ENCODE measurements at regions of chr3 and their contacts with region 1.

Region 1: GRCh38 chr3:63961891-63962290 is 49.7 kb upstream of the SCAANT1 start:
- DNase-seq: peak; percentile 65
- H3K4me3 ChIP-seq: no peak overlapping the region
- H3K27ac ChIP-seq: no peak overlapping the region
- H3K4me1 ChIP-seq: peaks cover 22% of the 10 kb centered on the region
- H3K27me3 ChIP-seq: no peaks in the 10 kb centered on the region
- CTCF ChIP-seq: peak; percentile 17 to 49
- POLR2A ChIP-seq: no peak

Region 2: DNA sequence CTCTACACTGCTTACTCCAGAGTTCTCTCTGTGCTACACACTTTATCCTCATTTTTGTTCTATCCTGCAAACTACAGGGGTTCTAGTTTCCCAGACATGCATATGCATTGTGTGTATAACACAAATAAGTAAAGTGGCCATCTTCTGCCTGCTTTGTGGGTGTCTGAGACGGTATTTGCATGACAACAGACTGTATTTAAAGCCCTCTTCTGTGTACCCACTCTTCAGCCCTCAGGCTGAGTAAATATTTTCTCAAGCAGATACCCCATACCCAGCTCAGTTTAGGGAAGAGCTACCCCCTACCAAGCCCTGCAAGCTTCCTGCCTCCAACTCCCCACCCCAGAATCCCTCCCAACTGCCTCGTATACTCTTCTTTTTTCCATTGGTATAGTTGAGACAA is 652.1 kb before region 1 on chr3:
- CTCF ChIA-PET with region 1: no interaction called
- POLR2A ChIA-PET with region 1: no interaction called
- dilution Hi-C with region 1: no loop called
- intact Hi-C with region 1: no loop called
- DNase-seq: no peak
- H3K4me3 ChIP-seq: no peak overlapping the region
- H3K27ac ChIP-seq: no peak overlapping the region
- H3K4me1 ChIP-seq: no peaks in the 10 kb centered on the region
- H3K27me3 ChIP-seq: no peaks in the 10 kb centered on the region
- CTCF ChIP-seq: no peak
- POLR2A ChIP-seq: no peak

Region 3: GRCh38 chr3:63863148-63864007 is 98.5 kb before region 1 on chr3 and contains the starts of genes ATXN7 and THOC7:
- CTCF ChIA-PET with region 1: no interaction called
- POLR2A ChIA-PET with region 1: no interaction called
- dilution Hi-C with region 1: no loop called
- intact Hi-C with region 1: loop called (anchors 5 kb)
- DNase-seq: peak; percentile 50
- H3K4me3 ChIP-seq: peak within 1 kb of the TSS; percentile 42 to 99 (median 68)
- H3K27ac ChIP-seq: peak within 1 kb of the TSS; percentile 75
- H3K4me1 ChIP-seq: peaks cover 12% of the 10 kb centered on the region
- H3K27me3 ChIP-seq: no peaks in the 10 kb centered on the region
- CTCF ChIP-seq: no peak
- POLR2A ChIP-seq: no peak
- total RNA-seq, gene ATXN7: 27.1 and 34.7 TPM in 2 replicates
- total RNA-seq, gene THOC7: 68.7 and 69.4 TPM in 2 replicates

Region 4: GRCh38 chr3:63911873-63912767 is 49.8 kb before region 1 on chr3 and contains the start of gene SCAANT1:
- CTCF ChIA-PET with region 1: interaction called, 5 read pairs
- POLR2A ChIA-PET with region 1: no interaction called
- dilution Hi-C with region 1: no loop called
- intact Hi-C with region 1: loop called (anchors 5 kb)
- DNase-seq: peak; percentile 86
- H3K4me3 ChIP-seq: peak within 1 kb of the TSS; percentile 74 to 85 (median 79)
- H3K27ac ChIP-seq: peak within 1 kb of the TSS; percentile 85
- H3K4me1 ChIP-seq: peaks cover 24% of the 10 kb centered on the region
- H3K27me3 ChIP-seq: no peaks in the 10 kb centered on the region
- CTCF ChIP-seq: no peak
- POLR2A ChIP-seq: no peak
- total RNA-seq, gene SCAANT1: not detected in 2 replicates

Region 5: GRCh38 chr3:63951492-63952247 is 10.2 kb before region 1 on chr3:
- CTCF ChIA-PET with region 1: interaction called, 11 read pairs
- POLR2A ChIA-PET with region 1: no interaction called
- dilution Hi-C with region 1: no loop called
- intact Hi-C with region 1: no loop called
- DNase-seq: no peak
- H3K4me3 ChIP-seq: no peak overlapping the region
- H3K27ac ChIP-seq: no peak overlapping the region
- H3K4me1 ChIP-seq: peaks cover 3% of the 10 kb centered on the region
- H3K27me3 ChIP-seq: no peaks in the 10 kb centered on the region
- CTCF ChIP-seq: no peak
- POLR2A ChIP-seq: no peak

Region 6: DNA sequence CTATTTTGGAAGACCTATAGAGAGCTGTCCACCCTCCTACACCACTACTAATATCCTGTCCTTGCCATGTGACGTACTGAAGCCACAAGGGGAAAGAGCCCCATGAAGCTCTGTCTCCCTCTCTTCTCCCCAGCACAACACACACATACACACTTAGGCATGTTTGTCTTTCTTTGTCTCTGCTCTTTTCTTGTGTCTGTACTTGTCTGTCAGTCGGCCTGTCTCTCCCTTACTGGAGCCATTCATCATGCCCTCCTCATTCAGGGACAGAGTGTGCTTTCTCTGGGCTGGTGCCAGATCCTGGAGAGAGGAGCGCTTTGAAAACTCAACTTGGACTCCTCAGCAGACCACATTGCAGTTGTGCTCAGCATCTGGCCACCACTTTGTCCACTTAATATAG is 13.8 kb after region 1 on chr3:
- CTCF ChIA-PET with region 1: interaction called, 23 read pairs
- POLR2A ChIA-PET with region 1: no interaction called
- dilution Hi-C with region 1: no loop called
- intact Hi-C with region 1: no loop called
- DNase-seq: peak; percentile 23
- H3K4me3 ChIP-seq: no peak overlapping the region
- H3K27ac ChIP-seq: no peak overlapping the region
- H3K4me1 ChIP-seq: no peaks in the 10 kb centered on the region
- H3K27me3 ChIP-seq: no peaks in the 10 kb centered on the region
- CTCF ChIP-seq: no peak
- POLR2A ChIP-seq: no peak

Measured in endothelial cell of umbilical vein (primary cell).